ENCODE measurements at regions of chr16 and their contacts with region 1.

Region 1: DNA sequence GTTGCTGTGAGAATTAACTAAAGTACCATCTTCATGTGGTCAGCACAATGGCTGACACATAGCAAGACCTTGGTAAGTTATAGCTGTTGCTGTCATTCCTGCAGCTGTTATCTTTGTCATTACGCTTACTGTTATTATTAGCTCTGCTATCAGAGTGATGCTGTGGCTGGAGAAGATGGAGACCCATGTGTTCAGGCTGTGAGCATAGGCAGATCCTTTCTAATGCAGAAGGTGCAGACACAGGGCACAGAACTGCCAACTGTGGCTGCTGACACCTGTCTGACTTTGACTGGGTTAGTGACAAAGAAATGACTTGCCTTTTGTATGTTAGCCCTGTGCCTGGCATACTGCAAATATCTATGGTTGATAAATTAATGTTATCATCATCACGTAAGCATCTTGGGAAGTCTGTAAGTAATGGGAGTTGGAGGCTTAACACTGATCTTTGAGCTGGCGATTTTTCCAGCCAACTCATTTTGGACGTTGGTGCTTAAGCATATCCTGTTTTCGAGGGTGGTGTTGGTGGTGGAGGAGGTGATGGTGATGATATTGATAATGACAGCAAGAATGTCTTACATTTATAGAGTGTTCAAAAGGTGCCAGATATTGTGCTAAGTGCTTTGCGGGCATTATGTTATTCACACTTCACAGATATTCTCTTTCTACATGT is 695.3 kb downstream of the WWOX start:
- DNase-seq: no peak
- H3K4me3 Mint-ChIP-seq: no peak overlapping the region
- H3K27ac Mint-ChIP-seq: peak overlapping the region; percentile 69
- H3K4me1 Mint-ChIP-seq: peaks cover 33% of the 10 kb centered on the region
- H3K27me3 Mint-ChIP-seq: no peaks in the 10 kb centered on the region

Region 2: DNA sequence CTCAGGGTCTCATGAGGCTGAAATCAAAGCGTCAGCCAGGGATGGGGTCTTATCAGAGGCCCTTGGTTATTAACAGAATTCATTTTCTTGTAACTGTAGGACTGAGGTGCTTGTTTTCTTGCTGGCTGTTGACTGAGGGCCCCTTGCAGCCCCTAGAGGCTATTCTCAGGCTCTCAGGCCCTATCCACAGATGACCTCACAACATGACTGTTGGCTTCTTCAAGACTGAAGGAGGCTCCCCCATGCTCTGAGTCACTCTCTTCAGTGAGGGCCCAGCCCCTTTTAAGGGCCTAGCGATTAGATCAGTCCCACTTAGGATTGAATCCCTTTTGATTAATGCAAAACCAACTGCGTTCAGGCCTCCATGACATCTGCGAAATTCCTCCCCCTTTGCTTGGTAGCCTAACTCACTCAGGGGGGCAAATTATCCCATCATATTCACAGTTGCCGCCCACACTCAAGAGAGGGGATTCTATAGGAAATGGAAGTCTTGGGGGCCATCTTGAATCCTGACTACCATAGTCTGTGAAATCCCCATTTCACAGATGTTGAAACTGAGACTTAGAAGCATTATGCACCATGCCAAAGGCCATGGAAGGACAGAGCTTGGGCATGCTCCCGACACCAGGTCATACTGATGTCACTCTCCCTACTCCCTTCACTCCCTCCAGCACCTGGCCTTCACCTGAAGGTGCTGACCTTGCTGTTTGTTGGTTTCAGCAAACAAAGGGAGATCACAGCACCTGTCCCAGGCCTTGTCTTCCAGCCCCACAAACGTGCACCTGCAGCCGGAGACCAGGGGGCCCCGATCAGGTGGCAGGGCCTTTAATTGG is 213.5 kb after region 1 on chr16:
- intact Hi-C with region 1: loop called (anchors 5 kb)
- DNase-seq: no peak
- H3K4me3 Mint-ChIP-seq: no peak overlapping the region
- H3K27ac Mint-ChIP-seq: peak overlapping the region; percentile 54
- H3K4me1 Mint-ChIP-seq: peaks cover 24% of the 10 kb centered on the region
- H3K27me3 Mint-ChIP-seq: no peaks in the 10 kb centered on the region

Region 3: DNA sequence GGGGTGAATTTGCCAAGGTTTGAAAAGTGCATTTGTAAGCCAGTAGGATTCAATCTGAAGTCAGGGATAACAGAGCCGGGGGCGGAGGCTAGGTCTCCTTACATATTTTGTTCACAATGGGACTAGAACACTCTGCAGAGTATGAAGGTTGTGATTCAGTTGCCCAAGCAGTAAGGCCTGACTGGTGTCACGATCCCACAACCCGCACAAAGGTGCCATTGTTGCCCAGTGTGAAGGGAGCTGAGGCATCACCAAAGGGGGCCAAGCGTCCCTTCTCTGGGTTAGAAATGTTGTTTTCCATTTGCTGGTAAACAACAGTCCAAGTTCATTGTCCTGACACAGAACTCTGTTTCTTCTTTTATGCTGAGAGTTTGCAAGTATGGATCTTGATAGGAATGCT is 334.0 kb after region 1 on chr16:
- intact Hi-C with region 1: no loop called
- DNase-seq: no peak
- H3K4me3 Mint-ChIP-seq: no peak overlapping the region
- H3K27ac Mint-ChIP-seq: no peak overlapping the region
- H3K4me1 Mint-ChIP-seq: no peaks in the 10 kb centered on the region
- H3K27me3 Mint-ChIP-seq: peaks cover 2% of the 10 kb centered on the region

Region 4: DNA sequence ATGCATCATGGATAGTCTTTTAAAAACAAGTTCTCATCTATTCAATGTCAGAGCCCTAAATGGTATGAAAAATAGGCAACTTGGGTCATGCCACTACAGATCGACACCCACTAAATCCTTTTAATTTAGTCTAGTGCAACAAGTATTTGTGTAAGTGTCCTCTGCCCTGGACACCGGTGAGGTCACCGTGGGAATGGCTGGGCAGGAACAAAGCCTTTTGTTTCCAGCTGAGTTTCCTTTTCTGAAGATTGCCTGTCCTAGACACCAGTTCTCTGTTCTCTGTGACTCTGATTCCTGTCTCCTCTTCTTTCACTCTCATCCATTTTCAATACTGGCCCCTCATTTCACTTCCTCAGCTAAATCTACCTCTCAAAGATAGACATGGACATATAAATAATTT is 359.4 kb after region 1 on chr16:
- intact Hi-C with region 1: no loop called
- DNase-seq: no peak
- H3K4me3 Mint-ChIP-seq: no peak overlapping the region
- H3K27ac Mint-ChIP-seq: no peak overlapping the region
- H3K4me1 Mint-ChIP-seq: peaks cover 38% of the 10 kb centered on the region
- H3K27me3 Mint-ChIP-seq: no peaks in the 10 kb centered on the region